ENCODE measurements at regions of chr22 and their contacts with region 1.

Region 1: GRCh38 chr22:32985899-32986765 is 72.0 kb downstream of the SYN3 start:
- DNase-seq: peak; percentile 77
- H3K4me3 ChIP-seq: no peak overlapping the region
- H3K27ac ChIP-seq: peak overlapping the region in 1 of 2 donors; percentile 36
- H3K4me1 ChIP-seq: no peaks in the 10 kb centered on the region
- H3K27me3 ChIP-seq: no peaks in the 10 kb centered on the region
- CTCF ChIP-seq: peak; percentile 75 to 89 (median 82)
- POLR2A ChIP-seq: no peak

Region 2: DNA sequence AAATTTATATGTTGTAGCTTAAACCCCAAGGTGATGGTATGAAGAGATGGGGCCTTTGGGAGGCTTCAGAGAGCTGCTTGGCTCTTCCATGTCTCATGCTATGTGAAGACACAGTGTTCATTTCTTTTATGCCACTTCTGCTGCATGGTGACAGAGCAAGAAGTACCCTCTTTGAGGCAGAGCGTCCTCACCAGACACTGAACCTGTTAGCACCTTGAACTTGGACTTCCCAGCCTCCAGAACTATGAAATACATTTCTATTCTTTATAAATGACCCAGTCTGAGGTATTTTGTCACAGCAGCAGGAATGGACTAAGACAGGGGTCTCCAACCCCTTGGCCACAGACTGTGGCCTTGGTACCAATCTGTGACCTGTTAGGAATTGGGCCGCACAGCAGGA is 331.1 kb before region 1 on chr22:
- intact Hi-C with region 1: loop called (anchors 5 kb)
- DNase-seq: no peak
- H3K4me3 ChIP-seq: no peak overlapping the region
- H3K27ac ChIP-seq: no peak overlapping the region
- H3K4me1 ChIP-seq: no peaks in the 10 kb centered on the region
- H3K27me3 ChIP-seq: no peaks in the 10 kb centered on the region
- CTCF ChIP-seq: no peak
- POLR2A ChIP-seq: no peak

Region 3: DNA sequence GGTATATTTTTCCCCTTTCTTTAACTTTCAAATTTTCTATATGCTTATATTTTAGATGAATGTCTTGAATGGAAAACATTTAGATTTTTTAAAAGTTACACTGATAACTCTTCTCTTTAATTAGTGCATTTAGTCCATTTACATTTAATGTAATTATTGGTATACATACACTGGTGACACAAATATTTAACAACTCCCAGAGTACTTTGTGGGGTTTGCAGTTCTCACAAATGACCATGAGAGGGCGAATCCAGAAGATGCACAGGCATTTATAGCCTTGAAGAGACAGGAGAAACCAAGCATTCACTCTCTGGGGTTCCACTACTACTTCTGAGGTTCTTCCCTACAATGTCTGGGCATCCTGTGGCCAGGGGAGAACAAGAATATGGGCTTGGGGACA is 59.5 kb before region 1 on chr22:
- intact Hi-C with region 1: loop called (anchors 5 kb)
- DNase-seq: no peak
- H3K4me3 ChIP-seq: no peak overlapping the region
- H3K27ac ChIP-seq: no peak overlapping the region
- H3K4me1 ChIP-seq: no peaks in the 10 kb centered on the region
- H3K27me3 ChIP-seq: no peaks in the 10 kb centered on the region
- CTCF ChIP-seq: peak in 3 of 4 experiments; percentile 30 to 59 (median 46)
- POLR2A ChIP-seq: no peak

Measured in prostate gland (tissue), 2 donors.